Dendritic cell treated with granulocyte-macrophage colony-stimulating factor and Interleukin-4, amounts not matched to agents 40 ng/mL and 50 ng/mL, for 4 days (primary cell): ENCODE measurements at regions of chr14 and their contacts with region 1.

Region 1: GRCh38 chr14:21103710-21104447 is 3.0 kb downstream of the TMEM253 start:
- H3K4me3 Mint-ChIP-seq: peak overlapping the region; percentile 70
- H3K27ac Mint-ChIP-seq: peak overlapping the region; percentile 85
- H3K4me1 Mint-ChIP-seq: peaks cover 54% of the 10 kb centered on the region
- H3K27me3 Mint-ChIP-seq: no peaks in the 10 kb centered on the region

Region 2: GRCh38 chr14:21014761-21015190 is 89.1 kb before region 1 on chr14:
- intact Hi-C with region 1: loop called (anchors 1 kb)
- H3K4me3 Mint-ChIP-seq: no peak overlapping the region
- H3K27ac Mint-ChIP-seq: no peak overlapping the region
- H3K4me1 Mint-ChIP-seq: peaks cover 51% of the 10 kb centered on the region
- H3K27me3 Mint-ChIP-seq: peaks cover 23% of the 10 kb centered on the region

Region 3: DNA sequence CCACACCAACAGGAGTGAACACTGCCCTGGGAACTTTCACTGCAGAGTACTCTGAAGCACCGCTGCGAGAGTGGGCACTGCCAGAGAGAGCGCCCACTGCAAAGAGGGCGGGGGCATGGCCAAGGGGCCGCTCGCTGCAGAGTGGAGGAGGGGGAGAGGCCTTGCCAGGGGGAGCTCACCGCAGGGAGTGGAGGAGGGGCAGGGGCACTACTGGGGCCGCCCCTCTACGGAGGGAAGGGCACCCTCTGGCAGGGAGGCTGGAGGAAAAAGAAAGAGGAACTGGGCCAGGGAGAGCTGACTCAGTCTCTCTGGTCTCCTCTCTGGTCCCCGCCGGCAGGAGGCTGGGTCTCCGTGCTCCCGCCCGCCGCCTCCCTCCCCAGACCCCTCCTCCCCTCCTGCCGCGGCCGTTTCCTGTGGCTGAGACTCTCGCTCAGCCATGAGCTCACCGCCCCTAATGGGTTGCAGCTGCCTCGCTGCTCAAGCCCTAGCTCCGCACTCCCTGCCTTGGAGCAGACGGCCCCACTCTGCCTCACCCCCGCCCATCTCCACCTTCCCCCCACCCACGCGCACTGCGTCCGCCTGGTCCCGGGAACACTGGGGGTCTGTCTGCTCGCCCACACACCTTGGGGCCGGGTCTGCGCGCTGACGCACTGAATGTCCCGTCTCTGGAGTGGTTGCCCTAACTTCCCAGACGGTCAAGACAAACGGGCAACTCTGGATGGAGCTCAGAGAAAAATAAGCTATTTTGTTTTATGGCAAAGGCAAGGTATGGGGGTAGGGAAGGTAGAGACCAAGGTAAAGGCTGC is 32.5 kb before region 1 on chr14:
- intact Hi-C with region 1: loop called (anchors 1 kb)
- H3K4me3 Mint-ChIP-seq: peak overlapping the region; percentile 93
- H3K27ac Mint-ChIP-seq: peak overlapping the region; percentile 93
- H3K4me1 Mint-ChIP-seq: peaks cover 67% of the 10 kb centered on the region
- H3K27me3 Mint-ChIP-seq: peaks cover 12% of the 10 kb centered on the region

Region 4: GRCh38 chr14:21092273-21093011 is 11.4 kb before region 1 on chr14:
- intact Hi-C with region 1: loop called (anchors 2 kb)
- H3K4me3 Mint-ChIP-seq: no peak overlapping the region
- H3K27ac Mint-ChIP-seq: no peak overlapping the region
- H3K4me1 Mint-ChIP-seq: peaks cover 60% of the 10 kb centered on the region
- H3K27me3 Mint-ChIP-seq: no peaks in the 10 kb centered on the region